ENCODE measurements at regions of chr1 and their contacts with region 1.

Region 1: GRCh38 chr1:203216274-203217138 is 13.0 kb downstream of the CHIT1 start:
- DNase-seq: peak; percentile 43 to 69
- H3K4me3 ChIP-seq: no peak overlapping the region
- H3K27ac ChIP-seq: no peak overlapping the region
- H3K4me1 ChIP-seq: no peaks in the 10 kb centered on the region
- H3K27me3 ChIP-seq: peaks cover 0 to 25% of the 10 kb centered on the region in 2 donors
- CTCF ChIP-seq: peak; percentile 74 to 86

Region 2: GRCh38 chr1:203038891-203039608 is 177.5 kb before region 1 on chr1:
- intact Hi-C with region 1: loop called (anchors 2 kb)
- DNase-seq: peak; percentile 76 to 79
- H3K4me3 ChIP-seq: no peak overlapping the region
- H3K27ac ChIP-seq: peak overlapping the region; percentile 56 to 76
- H3K4me1 ChIP-seq: peaks cover 0 to 26% (median 17%) of the 10 kb centered on the region in 4 donors
- H3K27me3 ChIP-seq: no peaks in the 10 kb centered on the region
- CTCF ChIP-seq: peak; percentile 91 to 96

Region 3: GRCh38 chr1:203117611-203118575 is 98.6 kb before region 1 on chr1:
- intact Hi-C with region 1: loop called (anchors 5 kb)
- DNase-seq: peak; percentile 61 to 77
- H3K4me3 ChIP-seq: no peak overlapping the region
- H3K27ac ChIP-seq: no peak overlapping the region
- H3K4me1 ChIP-seq: peaks cover 0 to 12% (median 5%) of the 10 kb centered on the region in 4 donors
- H3K27me3 ChIP-seq: peaks cover 0 to 71% of the 10 kb centered on the region in 2 donors
- CTCF ChIP-seq: peak; percentile 70 to 71

Measured in tibial artery (tissue), 4 donors.